ENCODE measurements at regions of chr7 and their contacts with region 1.

Region 1: GRCh38 chr7:67962863-67963262 is 966.2 kb downstream of the TYW1 start:
- DNase-seq: no peak

Region 2: DNA sequence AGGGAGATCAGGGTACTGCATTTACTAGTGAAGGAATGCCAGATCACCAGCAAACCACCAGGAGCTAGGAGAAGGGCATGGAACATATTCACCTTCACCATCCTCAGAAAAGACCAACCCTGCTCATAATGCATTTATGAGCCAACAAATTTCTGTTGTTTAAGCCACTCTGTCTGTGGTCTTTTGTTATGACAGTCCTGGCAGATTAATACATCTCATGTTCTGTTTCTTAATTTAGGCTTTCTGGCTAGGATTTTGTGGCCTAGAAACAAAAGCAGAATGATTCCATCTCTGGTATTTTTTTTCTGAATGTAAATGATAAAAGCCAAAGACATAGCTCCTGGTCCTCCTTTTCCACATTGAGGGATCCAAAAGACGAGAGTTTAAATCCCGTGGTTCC is 168.3 kb before region 1 on chr7:
- intact Hi-C with region 1: no loop called
- DNase-seq: no peak

Region 3: GRCh38 chr7:68025369-68025768 is 62.5 kb after region 1 on chr7:
- intact Hi-C with region 1: loop called in 1 of 2 experiments (anchors 2 kb)
- DNase-seq: no peak

Measured in posterior vena cava (tissue), 2 donors.